PC-9 (cell line): ENCODE measurements at regions of chr19 and their contacts with region 1.

Region 1: GRCh38 chr19:4633140-4633967 is 6.0 kb upstream of the TNFAIP8L1 start:
- DNase-seq: peak in 1 of 2 experiments; percentile 61
- H3K4me3 ChIP-seq: no peak overlapping the region
- H3K27ac ChIP-seq: no peak overlapping the region
- H3K4me1 ChIP-seq: no peaks in the 10 kb centered on the region; the same call in 1 of the 2 replicates
- H3K27me3 ChIP-seq: no peaks in the 10 kb centered on the region
- CTCF ChIP-seq: peak; percentile 55

Region 2: GRCh38 chr19:4576016-4576933 is 57.1 kb before region 1 on chr19:
- CTCF ChIA-PET with region 1: interaction called, 15 read pairs
- POLR2A ChIA-PET with region 1: no interaction called
- intact Hi-C with region 1: loop called (anchors 5 kb)
- DNase-seq: peak in 1 of 2 experiments; percentile 47
- H3K4me3 ChIP-seq: no peak overlapping the region
- H3K27ac ChIP-seq: no peak overlapping the region
- H3K4me1 ChIP-seq: peaks cover 15% of the 10 kb centered on the region
- H3K27me3 ChIP-seq: peaks cover 9% of the 10 kb centered on the region; the same call in 1 of the 2 replicates
- CTCF ChIP-seq: peak; percentile 70

Region 3: GRCh38 chr19:4815426-4816201 is 182.3 kb after region 1 on chr19:
- CTCF ChIA-PET with region 1: no interaction called
- POLR2A ChIA-PET with region 1: no interaction called
- intact Hi-C with region 1: no loop called
- DNase-seq: peak; percentile 69 to 74
- H3K4me3 ChIP-seq: peak overlapping the region; percentile 52; the same call in 1 of the 2 replicates
- H3K27ac ChIP-seq: no peak overlapping the region
- H3K4me1 ChIP-seq: no peaks in the 10 kb centered on the region
- H3K27me3 ChIP-seq: no peaks in the 10 kb centered on the region
- CTCF ChIP-seq: no peak